Activated CD8-positive, alpha-beta T cell treated with anti-CD3 and anti-CD28 coated beads, Interleukin-2, amount 10 ng/mL, durations not matched to agents 7 days and 5 days (primary cell): ENCODE measurements at regions of chr11 and their contacts with region 1.

Region 1: GRCh38 chr11:96342961-96343711 is at the start of gene MAML2:
- DNase-seq: peak; percentile 95
- ATAC-seq: peak; percentile 83
- H3K4me3 Mint-ChIP-seq: peak within 1 kb of the TSS; percentile 91
- H3K27ac Mint-ChIP-seq: peak within 1 kb of the TSS; percentile 95
- H3K4me1 Mint-ChIP-seq: peaks cover 31% of the 10 kb centered on the region
- H3K27me3 Mint-ChIP-seq: no peaks in the 10 kb centered on the region
- total RNA-seq, gene MAML2: 14.7 to 15.5 TPM

Region 2: GRCh38 chr11:96054870-96055705 is 288.0 kb before region 1 on chr11:
- CTCF ChIA-PET with region 1: interaction called, 96 read pairs
- POLR2A ChIA-PET with region 1: interaction called, 3 read pairs
- DNase-seq: no peak
- ATAC-seq: no peak
- H3K4me3 Mint-ChIP-seq: no peak overlapping the region
- H3K27ac Mint-ChIP-seq: no peak overlapping the region
- H3K4me1 Mint-ChIP-seq: peaks cover 43% of the 10 kb centered on the region
- H3K27me3 Mint-ChIP-seq: no peaks in the 10 kb centered on the region

Region 3: GRCh38 chr11:96136613-96137298 is 206.4 kb before region 1 on chr11:
- CTCF ChIA-PET with region 1: interaction called, 10 read pairs
- POLR2A ChIA-PET with region 1: no interaction called
- DNase-seq: no peak
- ATAC-seq: peak; percentile 22
- H3K4me3 Mint-ChIP-seq: no peak overlapping the region
- H3K27ac Mint-ChIP-seq: peak overlapping the region; percentile 3
- H3K4me1 Mint-ChIP-seq: peaks cover 46% of the 10 kb centered on the region
- H3K27me3 Mint-ChIP-seq: no peaks in the 10 kb centered on the region

Region 4: GRCh38 chr11:96215110-96215782 is 127.9 kb before region 1 on chr11:
- CTCF ChIA-PET with region 1: interaction called, 50 read pairs
- POLR2A ChIA-PET with region 1: interaction called, 4 read pairs
- DNase-seq: peak; percentile 67
- ATAC-seq: peak; percentile 81
- H3K4me3 Mint-ChIP-seq: peak overlapping the region; percentile 51
- H3K27ac Mint-ChIP-seq: peak overlapping the region; percentile 94
- H3K4me1 Mint-ChIP-seq: peaks cover 78% of the 10 kb centered on the region
- H3K27me3 Mint-ChIP-seq: no peaks in the 10 kb centered on the region

Region 5: GRCh38 chr11:96263361-96263763 is 79.8 kb before region 1 on chr11:
- CTCF ChIA-PET with region 1: interaction called, 35 read pairs
- POLR2A ChIA-PET with region 1: interaction called, 5 read pairs
- DNase-seq: no peak
- ATAC-seq: no peak
- H3K4me3 Mint-ChIP-seq: no peak overlapping the region
- H3K27ac Mint-ChIP-seq: no peak overlapping the region
- H3K4me1 Mint-ChIP-seq: peaks cover 80% of the 10 kb centered on the region
- H3K27me3 Mint-ChIP-seq: no peaks in the 10 kb centered on the region

Region 6: GRCh38 chr11:96324960-96325359 is 18.2 kb before region 1 on chr11:
- CTCF ChIA-PET with region 1: interaction called, 69 read pairs
- POLR2A ChIA-PET with region 1: interaction called, 5 read pairs
- DNase-seq: no peak
- ATAC-seq: no peak
- H3K4me3 Mint-ChIP-seq: no peak overlapping the region
- H3K27ac Mint-ChIP-seq: no peak overlapping the region
- H3K4me1 Mint-ChIP-seq: peaks cover 28% of the 10 kb centered on the region
- H3K27me3 Mint-ChIP-seq: no peaks in the 10 kb centered on the region

Region 7: DNA sequence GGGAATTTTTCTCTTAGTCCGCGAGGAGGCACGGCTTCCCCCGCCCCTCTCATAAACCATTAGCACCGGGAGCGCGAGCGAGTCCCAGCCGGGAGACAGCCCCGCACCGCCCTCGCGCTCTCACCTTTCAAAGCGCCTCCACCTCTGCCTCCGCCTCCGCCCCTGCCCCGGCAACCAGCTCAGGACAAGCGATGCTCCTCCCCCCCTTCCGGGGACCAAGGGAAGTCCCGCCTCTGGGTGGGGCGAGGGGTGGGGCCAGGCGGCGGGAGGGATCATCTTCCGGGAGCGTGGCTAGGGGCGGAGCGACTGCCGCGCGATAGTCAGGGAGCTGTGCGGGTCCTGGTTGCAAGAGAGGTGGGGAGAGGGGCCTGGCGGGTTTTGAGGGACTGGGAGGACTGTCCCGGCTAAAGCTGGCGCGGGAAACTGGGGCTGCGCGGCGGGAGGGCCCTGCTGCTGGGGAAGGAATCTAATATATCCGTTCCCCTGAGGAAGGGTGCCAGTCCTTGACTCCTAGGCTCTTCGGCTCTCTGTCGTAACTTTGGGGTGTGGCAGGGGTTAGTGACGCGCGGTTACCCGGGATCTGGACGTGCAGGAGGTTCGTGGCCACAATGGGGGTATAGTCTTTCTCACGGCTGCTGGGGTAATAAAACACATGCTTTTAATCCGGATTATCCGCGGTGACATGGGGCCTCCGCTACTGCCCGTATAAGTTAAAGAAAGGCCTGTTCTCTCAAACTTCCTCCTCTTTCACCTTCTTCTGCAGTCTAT is 46.8 kb after region 1 on chr11 and contains the starts of genes CCDC82 and JRKL:
- CTCF ChIA-PET with region 1: interaction called, 35 read pairs
- POLR2A ChIA-PET with region 1: interaction called, 22 read pairs
- DNase-seq: peak; percentile 98
- ATAC-seq: peak; percentile 95
- H3K4me3 Mint-ChIP-seq: peak within 1 kb of the TSS; percentile 91
- H3K27ac Mint-ChIP-seq: peak within 1 kb of the TSS; percentile 97
- H3K4me1 Mint-ChIP-seq: peaks cover 59% of the 10 kb centered on the region
- H3K27me3 Mint-ChIP-seq: no peaks in the 10 kb centered on the region
- total RNA-seq, gene CCDC82: 35.7 to 37.5 TPM
- total RNA-seq, gene JRKL: 9.4 to 10.3 TPM